H1 (cell line): ENCODE measurements at regions of chr2 and their contacts with region 1.

Region 1: DNA sequence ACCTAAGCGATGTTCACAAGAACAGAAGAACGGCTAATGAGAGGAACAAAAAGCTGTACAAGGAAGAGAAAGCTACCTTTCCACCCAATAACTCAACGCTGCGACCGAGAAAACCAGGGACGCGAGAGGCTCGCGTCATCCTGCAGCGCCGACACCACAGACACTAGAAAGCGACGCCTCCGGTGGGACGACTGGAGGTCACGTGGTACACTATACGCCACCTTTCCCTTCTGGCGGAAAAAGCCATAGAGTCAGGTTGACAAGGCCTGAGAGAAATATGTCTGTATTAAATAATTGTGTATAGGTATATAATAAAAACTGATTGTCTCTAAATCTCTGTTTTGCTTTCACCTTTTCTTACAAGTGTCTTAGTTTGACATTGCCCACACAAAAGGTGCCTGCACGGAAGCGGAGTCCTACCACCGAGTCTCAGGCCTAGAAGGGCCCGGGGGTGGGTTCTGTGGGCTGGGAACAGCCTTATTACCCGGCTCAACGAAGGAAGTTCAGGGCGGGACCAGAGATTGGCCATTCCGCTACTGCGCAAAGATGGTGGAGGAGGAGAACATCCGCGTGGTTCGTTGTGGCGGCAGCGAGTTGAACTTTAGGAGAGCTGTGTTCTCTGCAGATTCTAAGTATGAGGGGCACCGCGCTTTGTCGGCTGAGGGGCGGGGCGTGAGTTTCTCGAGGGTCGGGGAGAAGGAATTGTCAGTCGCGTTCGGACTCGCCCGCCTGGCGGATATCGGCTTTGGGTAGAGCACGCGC is at the start of gene WDR75:
- DNase-seq: peak; percentile 57 to 90
- H3K4me3 ChIP-seq: peak within 1 kb of the TSS; percentile 82 to 98 (median 94)
- H3K27ac ChIP-seq: peak within 1 kb of the TSS; percentile 89
- H3K4me1 ChIP-seq: peaks cover 0 to 6% (median 1%) of the 10 kb centered on the region in 4 experiments; a peak in 2 of 7 replicates
- H3K27me3 ChIP-seq: no peaks in the 10 kb centered on the region
- CTCF ChIP-seq: no peak
- EP300 ChIP-seq: no peak
- POLR2A ChIP-seq: peak; percentile 93 to 99
- RAD21 ChIP-seq: no peak
- total RNA-seq, gene WDR75: 69.3 and 77.1 TPM in 2 replicates

Region 2: GRCh38 chr2:189379287-189379630 is 61.9 kb before region 1 on chr2:
- CTCF ChIA-PET with region 1: no interaction called
- POLR2A ChIA-PET with region 1: no interaction called
- DNase-seq: peak in 1 of 2 experiments; percentile 9
- H3K4me3 ChIP-seq: peak overlapping the region in 1 of 4 experiments; percentile 7; a peak in 1 of 8 replicates
- H3K27ac ChIP-seq: no peak overlapping the region
- H3K4me1 ChIP-seq: peaks cover 0 to 7% (median 4%) of the 10 kb centered on the region in 4 experiments; a peak in 2 of 7 replicates
- H3K27me3 ChIP-seq: no peaks in the 10 kb centered on the region
- CTCF ChIP-seq: no peak
- EP300 ChIP-seq: no peak
- POLR2A ChIP-seq: no peak
- RAD21 ChIP-seq: no peak

Region 3: GRCh38 chr2:189412330-189412953 is 28.7 kb before region 1 on chr2:
- CTCF ChIA-PET with region 1: no interaction called
- POLR2A ChIA-PET with region 1: no interaction called
- DNase-seq: peak in 1 of 2 experiments; percentile 56
- H3K4me3 ChIP-seq: no peak overlapping the region
- H3K27ac ChIP-seq: no peak overlapping the region
- H3K4me1 ChIP-seq: no peaks in the 10 kb centered on the region
- H3K27me3 ChIP-seq: no peaks in the 10 kb centered on the region
- CTCF ChIP-seq: peak in 2 of 3 experiments; percentile 64 to 68; a peak in 3 of 4 replicates
- EP300 ChIP-seq: no peak
- POLR2A ChIP-seq: no peak
- RAD21 ChIP-seq: peak; percentile 91 to 92

Region 4: GRCh38 chr2:189425676-189426075 is 15.5 kb before region 1 on chr2:
- CTCF ChIA-PET with region 1: interaction called, 3 read pairs
- POLR2A ChIA-PET with region 1: interaction called, 11 read pairs
- DNase-seq: no peak
- H3K4me3 ChIP-seq: no peak overlapping the region
- H3K27ac ChIP-seq: no peak overlapping the region
- H3K4me1 ChIP-seq: peaks cover 0 to 3% (median 0%) of the 10 kb centered on the region in 4 experiments; a peak in 3 of 7 replicates
- H3K27me3 ChIP-seq: no peaks in the 10 kb centered on the region
- CTCF ChIP-seq: no peak
- EP300 ChIP-seq: no peak
- POLR2A ChIP-seq: no peak
- RAD21 ChIP-seq: no peak

Region 5: DNA sequence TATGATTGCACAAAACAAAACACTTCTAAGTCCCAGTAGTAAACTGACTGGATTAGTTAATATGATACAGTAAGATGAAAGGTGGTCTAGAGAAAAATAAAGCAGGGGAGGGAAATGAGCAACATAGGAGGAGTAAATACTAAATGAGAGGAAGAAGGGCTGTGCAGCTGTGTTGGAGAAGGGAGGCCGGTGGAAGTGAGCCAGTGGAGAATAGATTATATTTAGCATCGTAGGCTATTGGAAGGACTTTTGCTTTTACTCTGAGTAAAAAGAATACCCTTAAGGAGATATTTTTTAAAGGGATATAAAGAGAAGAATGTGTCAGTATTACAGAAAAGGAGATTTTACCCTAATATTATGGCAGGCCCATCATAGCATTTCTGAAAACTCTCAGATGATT is 12.9 kb after region 1 on chr2:
- CTCF ChIA-PET with region 1: interaction called, 3 read pairs
- POLR2A ChIA-PET with region 1: interaction called, 13 read pairs
- DNase-seq: no peak
- H3K4me3 ChIP-seq: no peak overlapping the region
- H3K27ac ChIP-seq: no peak overlapping the region
- H3K4me1 ChIP-seq: no peaks in the 10 kb centered on the region
- H3K27me3 ChIP-seq: no peaks in the 10 kb centered on the region
- CTCF ChIP-seq: no peak
- EP300 ChIP-seq: no peak
- POLR2A ChIP-seq: no peak
- RAD21 ChIP-seq: no peak